GM12878 (cell line): ENCODE measurements at regions of chr14 and their contacts with region 1.

Region 1: DNA sequence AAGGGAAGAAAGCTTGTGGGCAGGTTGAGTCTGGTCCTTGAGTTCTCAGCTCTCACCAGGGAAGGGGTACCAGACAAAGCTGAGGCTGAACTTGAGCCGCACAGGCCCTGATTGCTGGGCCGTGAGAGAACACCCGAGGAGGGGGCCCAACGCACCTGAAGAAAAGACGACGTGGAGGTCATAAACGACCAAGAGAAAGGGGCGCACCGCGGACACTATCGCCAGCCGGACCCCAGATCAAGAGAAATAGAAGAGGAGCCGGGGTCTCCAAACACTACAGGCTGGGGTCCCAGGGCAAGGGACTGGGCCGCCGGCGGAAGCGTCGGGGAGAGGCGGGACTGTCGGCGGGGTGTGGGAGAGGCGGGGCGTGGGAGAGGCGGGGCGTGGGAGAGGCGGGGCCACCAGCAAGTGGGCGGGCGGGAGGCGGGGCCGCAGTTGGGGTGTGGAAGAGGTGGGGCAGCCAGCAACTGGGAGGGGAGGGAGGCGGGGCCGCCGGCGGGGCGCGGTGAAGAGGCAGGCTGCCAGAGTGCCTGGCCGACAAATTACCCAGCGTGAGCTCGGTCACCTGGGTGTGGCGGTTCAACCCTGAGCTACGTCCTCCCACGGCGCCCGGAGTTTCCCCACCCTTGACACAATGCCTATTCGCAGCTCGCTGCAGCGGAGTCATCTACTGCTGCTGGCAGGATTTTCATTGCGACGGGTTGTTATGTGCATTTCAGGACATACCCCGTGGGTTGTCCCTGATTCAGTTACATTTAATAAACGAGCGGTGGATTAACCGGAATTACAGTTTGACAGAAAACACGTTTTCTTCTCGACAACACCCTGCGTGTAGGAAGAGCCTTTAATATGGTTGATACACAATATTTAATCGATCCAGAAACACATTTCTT is 15.5 kb upstream of the NEMF start:
- DNase-seq: peak; percentile 92
- ATAC-seq: peak; percentile 89
- H3K4me3 ChIP-seq: peak overlapping the region; percentile 89
- H3K27ac ChIP-seq: peak overlapping the region; percentile 93
- H3K4me1 ChIP-seq: peaks cover 20% of the 10 kb centered on the region
- H3K27me3 ChIP-seq: no peaks in the 10 kb centered on the region
- CTCF ChIP-seq: no peak
- EP300 ChIP-seq: no peak
- POLR2A ChIP-seq: peak; percentile 83
- RAD21 ChIP-seq: no peak

Region 2: GRCh38 chr14:49879683-49880204 is 11.7 kb after region 1 on chr14:
- CTCF ChIA-PET with region 1: interaction called, 30 read pairs
- POLR2A ChIA-PET with region 1: interaction called, 3 read pairs
- RAD21 ChIA-PET with region 1: interaction called, 9 read pairs
- SMC1A ChIA-PET with region 1: interaction called, 19 read pairs
- in situ Hi-C with region 1: no loop called
- intact Hi-C with region 1: no loop called
- DNase-seq: no peak
- ATAC-seq: peak; percentile 98
- H3K4me3 ChIP-seq: no peak overlapping the region
- H3K27ac ChIP-seq: no peak overlapping the region
- H3K4me1 ChIP-seq: no peaks in the 10 kb centered on the region
- H3K27me3 ChIP-seq: no peaks in the 10 kb centered on the region
- CTCF ChIP-seq: peak; percentile 50 to 74 (median 72)
- EP300 ChIP-seq: no peak
- POLR2A ChIP-seq: no peak
- RAD21 ChIP-seq: peak; percentile 72

Region 3: GRCh38 chr14:49982501-49982951 is 114.4 kb after region 1 on chr14:
- CTCF ChIA-PET with region 1: no interaction called
- POLR2A ChIA-PET with region 1: no interaction called
- RAD21 ChIA-PET with region 1: no interaction called
- SMC1A ChIA-PET with region 1: no interaction called
- in situ Hi-C with region 1: no loop called
- intact Hi-C with region 1: no loop called
- DNase-seq: no peak
- ATAC-seq: no peak
- H3K4me3 ChIP-seq: no peak overlapping the region
- H3K27ac ChIP-seq: no peak overlapping the region
- H3K4me1 ChIP-seq: peaks cover 8% of the 10 kb centered on the region
- H3K27me3 ChIP-seq: no peaks in the 10 kb centered on the region
- CTCF ChIP-seq: no peak
- EP300 ChIP-seq: no peak
- POLR2A ChIP-seq: no peak
- RAD21 ChIP-seq: no peak

Region 4: GRCh38 chr14:49992901-49993335 is 124.8 kb after region 1 on chr14:
- CTCF ChIA-PET with region 1: interaction called, 82 read pairs
- POLR2A ChIA-PET with region 1: interaction called, 10 read pairs
- RAD21 ChIA-PET with region 1: interaction called, 7 read pairs
- SMC1A ChIA-PET with region 1: interaction called, 14 read pairs
- in situ Hi-C with region 1: no loop called
- intact Hi-C with region 1: no loop called
- DNase-seq: peak; percentile 87
- ATAC-seq: peak; percentile 95
- H3K4me3 ChIP-seq: no peak overlapping the region
- H3K27ac ChIP-seq: peak overlapping the region; percentile 29; the same call in 1 of the 2 replicates
- H3K4me1 ChIP-seq: peaks cover 12% of the 10 kb centered on the region
- H3K27me3 ChIP-seq: no peaks in the 10 kb centered on the region
- CTCF ChIP-seq: no peak
- EP300 ChIP-seq: peak; percentile 91; a peak in 3 of 4 replicates
- POLR2A ChIP-seq: peak; percentile 75
- RAD21 ChIP-seq: no peak

Region 5: DNA sequence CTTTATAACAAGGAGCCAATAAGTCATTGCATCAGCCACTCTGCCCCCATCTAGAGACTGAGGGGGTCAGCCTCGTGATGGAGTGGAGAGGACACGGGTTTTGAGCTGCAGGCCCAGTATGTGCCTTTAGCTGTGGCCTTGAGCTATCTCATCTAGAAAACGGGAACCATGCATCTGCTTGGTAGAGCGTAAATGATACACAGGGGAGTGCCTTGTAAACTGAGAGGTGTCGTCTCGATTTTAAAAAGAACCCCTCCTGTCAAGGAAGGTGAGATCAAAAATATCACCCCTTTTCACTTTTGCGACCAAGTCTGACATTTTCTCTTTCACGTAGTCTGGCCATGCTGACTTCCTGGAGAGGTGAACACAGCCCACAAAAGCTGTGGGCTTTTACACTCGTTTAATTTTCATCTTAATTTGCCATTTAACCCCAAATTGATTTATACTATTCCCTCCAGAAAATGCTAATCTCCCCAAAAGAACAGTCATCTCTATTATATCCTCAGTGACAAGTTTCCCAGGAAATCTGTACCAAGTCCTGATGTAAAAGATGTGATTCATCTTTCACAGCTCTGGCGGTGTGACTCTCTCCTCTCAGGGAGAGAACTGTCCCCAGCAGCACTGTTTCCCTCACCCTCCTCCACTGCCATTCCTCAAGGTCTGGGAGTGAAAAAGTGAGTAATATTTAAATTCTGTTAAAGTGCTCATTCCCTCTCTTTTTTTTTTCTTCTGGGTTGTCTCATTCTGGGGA is 217.7 kb after region 1 on chr14:
- CTCF ChIA-PET with region 1: interaction called, 34 read pairs
- POLR2A ChIA-PET with region 1: interaction called, 16 read pairs
- RAD21 ChIA-PET with region 1: interaction called, 37 read pairs
- SMC1A ChIA-PET with region 1: interaction called, 31 read pairs
- in situ Hi-C with region 1: loop called (anchors 10 kb)
- intact Hi-C with region 1: loop called (anchors 1 kb)
- DNase-seq: peak; percentile 95
- ATAC-seq: peak; percentile 73
- H3K4me3 ChIP-seq: peak overlapping the region; percentile 38; the same call in 1 of the 2 replicates
- H3K27ac ChIP-seq: peak overlapping the region; percentile 95
- H3K4me1 ChIP-seq: peaks cover 68% of the 10 kb centered on the region
- H3K27me3 ChIP-seq: no peaks in the 10 kb centered on the region
- CTCF ChIP-seq: no peak
- EP300 ChIP-seq: peak; percentile 85 to 91
- POLR2A ChIP-seq: peak; percentile 48; the same call in 1 of the 2 replicates
- RAD21 ChIP-seq: no peak

Region 6: GRCh38 chr14:50109342-50109741 is 241.3 kb after region 1 on chr14:
- CTCF ChIA-PET with region 1: interaction called, 243 read pairs
- POLR2A ChIA-PET with region 1: interaction called, 34 read pairs
- RAD21 ChIA-PET with region 1: interaction called, 26 read pairs
- SMC1A ChIA-PET with region 1: interaction called, 68 read pairs
- in situ Hi-C with region 1: no loop called
- intact Hi-C with region 1: loop called (anchors 1 kb)
- DNase-seq: no peak
- ATAC-seq: no peak
- H3K4me3 ChIP-seq: no peak overlapping the region
- H3K27ac ChIP-seq: no peak overlapping the region
- H3K4me1 ChIP-seq: peaks cover 18% of the 10 kb centered on the region
- H3K27me3 ChIP-seq: no peaks in the 10 kb centered on the region
- CTCF ChIP-seq: no peak
- EP300 ChIP-seq: no peak
- POLR2A ChIP-seq: no peak
- RAD21 ChIP-seq: no peak